ENCODE measurements at regions of chr6 and their contacts with region 1.

Region 1: GRCh38 chr6:20056350-20056992 is 155.8 kb downstream of the MBOAT1 start:
- DNase-seq: peak; percentile 8
- ATAC-seq: no peak
- H3K4me3 ChIP-seq: no peak overlapping the region
- H3K27ac ChIP-seq: no peak overlapping the region; the same call in 1 of the 2 replicates
- H3K4me1 ChIP-seq: no peaks in the 10 kb centered on the region
- H3K27me3 ChIP-seq: no peaks in the 10 kb centered on the region
- CTCF ChIP-seq: peak; percentile 65; the same call in 1 of the 2 replicates

Region 2: DNA sequence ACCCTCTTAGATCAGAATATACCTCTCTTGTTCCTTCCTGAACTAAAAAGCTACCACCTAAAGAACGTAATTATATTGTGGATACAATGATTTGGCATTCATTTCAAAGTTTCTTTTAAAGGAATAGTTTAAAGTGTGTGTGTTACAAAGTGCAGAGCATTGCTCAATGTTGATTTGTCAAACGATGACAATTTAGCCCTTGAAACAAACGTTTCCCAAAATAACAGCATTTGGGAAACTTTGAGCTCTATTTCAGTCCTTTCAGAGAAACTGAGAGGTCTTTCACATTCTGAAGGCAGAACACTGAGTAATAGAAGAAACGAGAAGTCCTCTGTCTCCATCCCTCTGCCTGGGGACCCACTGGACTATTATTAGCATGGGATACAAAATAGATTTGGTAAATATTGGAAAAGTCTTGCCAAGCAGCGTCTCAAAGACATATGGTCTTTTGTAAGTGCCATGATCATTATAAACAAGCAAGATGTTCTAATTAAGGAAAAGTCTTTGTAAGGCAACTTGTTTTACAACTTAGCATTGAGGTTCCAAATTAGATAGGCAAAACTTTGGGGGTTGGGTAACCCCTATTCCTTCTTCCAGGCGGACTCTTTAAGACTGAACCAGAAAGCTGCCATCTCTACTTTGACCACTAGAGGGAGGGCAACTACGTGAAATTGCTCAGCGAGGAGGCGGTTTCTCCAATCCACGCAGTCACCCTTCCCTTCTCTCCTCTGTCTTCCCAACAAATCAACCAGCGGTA is 1460.5 kb before region 1 on chr6:
- CTCF ChIA-PET with region 1: interaction called, 5 read pairs
- POLR2A ChIA-PET with region 1: no interaction called
- in situ Hi-C with region 1: no loop called
- intact Hi-C with region 1: loop called (anchors 10 kb)
- DNase-seq: peak; percentile 69
- ATAC-seq: peak; percentile 93
- H3K4me3 ChIP-seq: no peak overlapping the region
- H3K27ac ChIP-seq: no peak overlapping the region
- H3K4me1 ChIP-seq: no peaks in the 10 kb centered on the region
- H3K27me3 ChIP-seq: no peaks in the 10 kb centered on the region; the same call in 1 of the 2 replicates
- CTCF ChIP-seq: peak; percentile 93

Region 3: DNA sequence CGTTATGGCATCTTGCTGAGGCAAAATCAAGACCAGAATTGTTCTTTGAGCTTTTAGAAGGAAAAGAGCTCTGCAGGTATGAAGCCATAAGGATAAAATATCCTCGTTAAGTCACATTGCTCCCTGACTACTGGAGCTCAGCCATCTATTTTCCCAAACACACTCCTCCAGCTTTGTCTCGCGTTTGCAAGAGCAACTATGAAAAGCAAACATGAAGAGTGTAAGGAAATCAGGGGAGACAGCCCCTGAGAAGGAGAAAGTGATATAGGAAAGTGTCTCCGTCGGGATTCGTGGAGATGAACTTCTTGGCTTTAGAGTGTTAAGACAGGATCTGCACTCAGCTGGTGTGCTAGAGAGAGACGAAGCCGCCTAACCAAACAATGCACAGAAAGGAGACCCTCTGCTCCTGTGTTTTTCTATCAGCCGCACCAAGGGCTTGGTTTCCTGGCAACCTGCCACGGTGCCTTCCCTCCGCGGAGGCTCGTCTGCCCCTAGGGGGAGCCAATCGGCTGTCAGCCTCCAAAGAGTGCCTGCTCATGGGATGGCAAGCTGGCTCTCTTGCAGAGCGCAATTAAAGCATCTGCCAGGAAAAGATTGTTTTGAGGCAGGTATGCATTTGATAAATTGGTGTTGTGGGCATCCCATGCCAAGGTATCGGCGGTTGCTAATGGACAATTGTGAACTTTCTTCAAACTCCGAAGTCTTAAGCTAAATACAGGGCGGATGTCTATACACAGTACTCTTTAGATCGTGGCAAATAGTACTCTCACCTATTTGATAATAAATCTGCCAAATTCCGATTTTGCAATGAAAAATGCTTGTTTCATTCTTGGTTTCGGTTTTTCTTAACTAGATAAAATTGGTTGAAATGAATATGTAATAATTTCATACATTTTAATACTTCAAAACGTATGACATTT is 1066.2 kb before region 1 on chr6:
- CTCF ChIA-PET with region 1: no interaction called
- POLR2A ChIA-PET with region 1: no interaction called
- in situ Hi-C with region 1: no loop called
- intact Hi-C with region 1: loop called (anchors 10 kb)
- DNase-seq: no peak
- ATAC-seq: no peak
- H3K4me3 ChIP-seq: no peak overlapping the region
- H3K27ac ChIP-seq: no peak overlapping the region
- H3K4me1 ChIP-seq: no peaks in the 10 kb centered on the region
- H3K27me3 ChIP-seq: no peaks in the 10 kb centered on the region
- CTCF ChIP-seq: peak; percentile 70

Region 4: DNA sequence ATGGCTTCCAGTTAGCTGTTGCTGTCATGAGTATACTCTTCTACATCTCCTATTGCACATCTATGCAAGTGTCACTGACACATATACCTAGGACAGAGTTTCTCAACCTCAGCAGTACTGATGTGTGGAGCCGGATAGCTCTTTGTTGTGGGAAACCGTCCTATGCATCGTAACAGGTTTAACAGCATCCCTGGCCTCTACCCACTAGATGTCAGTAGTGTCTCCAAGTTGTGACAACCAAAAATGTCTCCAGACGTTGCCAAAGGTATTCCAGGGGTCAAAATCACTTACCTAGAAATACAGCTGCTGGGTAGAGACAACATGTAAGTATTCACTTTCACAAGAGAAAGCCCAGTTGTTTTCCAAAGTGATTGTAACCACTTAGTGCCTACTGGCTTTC is 1031.7 kb before region 1 on chr6:
- CTCF ChIA-PET with region 1: no interaction called
- POLR2A ChIA-PET with region 1: no interaction called
- in situ Hi-C with region 1: no loop called
- intact Hi-C with region 1: loop called (anchors 10 kb)
- DNase-seq: peak; percentile 28
- ATAC-seq: peak; percentile 69; the same call in 1 of the 2 replicates
- H3K4me3 ChIP-seq: no peak overlapping the region
- H3K27ac ChIP-seq: no peak overlapping the region
- H3K4me1 ChIP-seq: no peaks in the 10 kb centered on the region
- H3K27me3 ChIP-seq: no peaks in the 10 kb centered on the region
- CTCF ChIP-seq: peak; percentile 73

Region 5: GRCh38 chr6:19731286-19731685 is 325.2 kb before region 1 on chr6:
- CTCF ChIA-PET with region 1: no interaction called
- POLR2A ChIA-PET with region 1: no interaction called
- in situ Hi-C with region 1: no loop called
- intact Hi-C with region 1: loop called (anchors 10 kb)
- DNase-seq: no peak
- ATAC-seq: no peak
- H3K4me3 ChIP-seq: no peak overlapping the region
- H3K27ac ChIP-seq: no peak overlapping the region
- H3K4me1 ChIP-seq: no peaks in the 10 kb centered on the region; the same call in 1 of the 2 replicates
- H3K27me3 ChIP-seq: no peaks in the 10 kb centered on the region
- CTCF ChIP-seq: no peak

Region 6: GRCh38 chr6:19812512-19813119 is 243.9 kb before region 1 on chr6:
- CTCF ChIA-PET with region 1: no interaction called
- POLR2A ChIA-PET with region 1: no interaction called
- in situ Hi-C with region 1: no loop called
- intact Hi-C with region 1: loop called (anchors 2 kb)
- DNase-seq: no peak
- ATAC-seq: peak; percentile 75
- H3K4me3 ChIP-seq: no peak overlapping the region
- H3K27ac ChIP-seq: no peak overlapping the region
- H3K4me1 ChIP-seq: no peaks in the 10 kb centered on the region
- H3K27me3 ChIP-seq: no peaks in the 10 kb centered on the region
- CTCF ChIP-seq: peak; percentile 79

Region 7: GRCh38 chr6:19866985-19867627 is 189.4 kb before region 1 on chr6:
- CTCF ChIA-PET with region 1: interaction called, 5 read pairs
- POLR2A ChIA-PET with region 1: no interaction called
- in situ Hi-C with region 1: no loop called
- intact Hi-C with region 1: loop called (anchors 10 kb)
- DNase-seq: peak; percentile 41
- ATAC-seq: peak; percentile 92
- H3K4me3 ChIP-seq: no peak overlapping the region
- H3K27ac ChIP-seq: peak overlapping the region; percentile 68
- H3K4me1 ChIP-seq: peaks cover 20% of the 10 kb centered on the region
- H3K27me3 ChIP-seq: no peaks in the 10 kb centered on the region
- CTCF ChIP-seq: no peak

Region 8: GRCh38 chr6:20115246-20115980 is 58.9 kb after region 1 on chr6:
- CTCF ChIA-PET with region 1: no interaction called
- POLR2A ChIA-PET with region 1: no interaction called
- in situ Hi-C with region 1: no loop called
- intact Hi-C with region 1: no loop called
- DNase-seq: no peak
- ATAC-seq: no peak
- H3K4me3 ChIP-seq: no peak overlapping the region
- H3K27ac ChIP-seq: no peak overlapping the region
- H3K4me1 ChIP-seq: no peaks in the 10 kb centered on the region
- H3K27me3 ChIP-seq: no peaks in the 10 kb centered on the region
- CTCF ChIP-seq: no peak

Region 9: GRCh38 chr6:20126789-20127653 is 70.5 kb after region 1 on chr6:
- CTCF ChIA-PET with region 1: no interaction called
- POLR2A ChIA-PET with region 1: no interaction called
- in situ Hi-C with region 1: no loop called
- intact Hi-C with region 1: no loop called
- DNase-seq: peak; percentile 42
- ATAC-seq: peak; percentile 95
- H3K4me3 ChIP-seq: no peak overlapping the region
- H3K27ac ChIP-seq: no peak overlapping the region
- H3K4me1 ChIP-seq: no peaks in the 10 kb centered on the region
- H3K27me3 ChIP-seq: no peaks in the 10 kb centered on the region
- CTCF ChIP-seq: peak; percentile 98